CD14-positive monocyte (primary cell): ENCODE measurements at regions of chr20 and their contacts with region 1.

Region 1: DNA sequence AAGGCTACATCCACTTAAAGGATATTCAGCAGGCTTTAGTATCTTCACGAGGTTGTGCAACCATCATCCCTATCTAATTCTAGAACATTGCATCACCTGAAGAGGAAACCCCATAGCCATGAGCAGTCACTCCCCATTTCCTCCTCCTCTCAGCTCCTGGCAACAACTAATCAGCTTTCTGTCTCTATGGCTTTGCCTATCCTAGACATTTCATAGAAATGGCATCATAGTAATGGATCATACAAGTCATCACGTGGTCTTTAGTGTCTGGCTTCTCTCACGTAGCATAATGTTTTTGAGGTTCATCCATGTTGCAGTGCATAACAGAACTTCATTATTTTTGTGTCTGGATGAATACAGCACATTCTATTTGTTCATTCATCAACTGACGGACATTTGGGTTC is 20.5 kb downstream of the SNAI1 start:
- DNase-seq: peak; percentile 93 to 99 (median 98)
- H3K4me3 ChIP-seq: no peak overlapping the region
- H3K4me3 Mint-ChIP-seq: peak overlapping the region in 1 of 2 donors; percentile 9
- H3K27ac ChIP-seq: peak overlapping the region; percentile 70 to 90
- H3K27ac Mint-ChIP-seq: peak overlapping the region; percentile 91 to 99 (median 96)
- H3K4me1 ChIP-seq: peaks cover 82 to 83% of the 10 kb centered on the region in 2 donors
- H3K4me1 Mint-ChIP-seq: peaks cover 74% of the 10 kb centered on the region
- H3K27me3 ChIP-seq: no peaks in the 10 kb centered on the region
- H3K27me3 Mint-ChIP-seq: peaks cover 0 to 4% (median 0%) of the 10 kb centered on the region in 3 donors
- CTCF ChIP-seq: no peak

Region 2: DNA sequence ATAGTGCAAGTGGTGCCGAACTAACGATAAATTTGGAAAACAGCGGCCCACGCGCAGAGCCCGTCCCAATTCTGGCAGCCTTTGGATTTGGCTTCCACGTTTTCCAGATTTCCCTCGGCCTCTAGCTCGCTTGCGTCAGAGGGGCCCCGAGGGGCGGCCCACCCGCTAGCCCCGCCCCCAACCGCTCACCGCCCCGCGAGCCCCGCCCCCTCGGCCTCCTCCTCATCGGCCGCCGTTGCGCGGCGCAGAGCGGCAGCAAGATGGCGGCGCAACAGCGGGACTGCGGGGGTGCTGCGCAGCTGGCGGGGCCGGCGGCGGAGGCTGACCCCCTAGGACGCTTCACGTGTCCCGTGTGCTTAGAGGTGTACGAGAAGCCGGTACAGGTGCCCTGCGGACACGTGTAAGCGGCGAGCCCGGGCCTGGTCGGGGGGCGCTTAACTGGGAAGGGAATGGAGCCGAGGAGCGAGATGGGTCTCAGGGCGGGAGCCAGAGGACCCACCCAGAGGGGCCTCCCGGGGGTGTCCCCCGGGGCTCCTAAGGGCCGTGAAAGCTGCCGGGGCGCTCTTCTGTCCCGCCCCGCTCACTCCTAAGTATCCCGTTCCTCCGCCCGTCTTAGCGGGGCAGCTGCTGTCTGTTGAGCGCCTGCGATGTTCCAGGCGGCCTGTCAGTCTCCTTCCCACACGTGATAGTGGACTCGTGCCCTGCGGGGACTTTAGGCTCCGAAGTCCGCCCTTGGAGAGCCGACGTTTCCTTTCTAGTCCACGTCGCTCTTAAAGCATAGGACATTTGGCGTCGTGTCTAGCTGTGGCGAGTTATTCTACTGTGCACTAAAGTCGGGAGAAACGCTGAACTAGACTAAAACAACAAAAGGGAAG is 66.9 kb before region 1 on chr20 and contains the start of gene RNF114:
- intact Hi-C with region 1: no loop called
- DNase-seq: peak; percentile 87 to 89 (median 87)
- H3K4me3 ChIP-seq: peak within 1 kb of the TSS; percentile 82 to 93 (median 93)
- H3K4me3 Mint-ChIP-seq: peak within 1 kb of the TSS; percentile 94 to 98
- H3K27ac ChIP-seq: peak within 1 kb of the TSS; percentile 90 to 97
- H3K27ac Mint-ChIP-seq: peak within 1 kb of the TSS; percentile 95 to 98 (median 97)
- H3K4me1 ChIP-seq: peaks cover 45 to 51% of the 10 kb centered on the region in 2 donors
- H3K4me1 Mint-ChIP-seq: peaks cover 51% of the 10 kb centered on the region
- H3K27me3 ChIP-seq: no peaks in the 10 kb centered on the region
- H3K27me3 Mint-ChIP-seq: no peaks in the 10 kb centered on the region
- CTCF ChIP-seq: no peak
- polyA plus RNA-seq, gene RNF114: 128 to 164 (median 146) TPM

Region 3: DNA sequence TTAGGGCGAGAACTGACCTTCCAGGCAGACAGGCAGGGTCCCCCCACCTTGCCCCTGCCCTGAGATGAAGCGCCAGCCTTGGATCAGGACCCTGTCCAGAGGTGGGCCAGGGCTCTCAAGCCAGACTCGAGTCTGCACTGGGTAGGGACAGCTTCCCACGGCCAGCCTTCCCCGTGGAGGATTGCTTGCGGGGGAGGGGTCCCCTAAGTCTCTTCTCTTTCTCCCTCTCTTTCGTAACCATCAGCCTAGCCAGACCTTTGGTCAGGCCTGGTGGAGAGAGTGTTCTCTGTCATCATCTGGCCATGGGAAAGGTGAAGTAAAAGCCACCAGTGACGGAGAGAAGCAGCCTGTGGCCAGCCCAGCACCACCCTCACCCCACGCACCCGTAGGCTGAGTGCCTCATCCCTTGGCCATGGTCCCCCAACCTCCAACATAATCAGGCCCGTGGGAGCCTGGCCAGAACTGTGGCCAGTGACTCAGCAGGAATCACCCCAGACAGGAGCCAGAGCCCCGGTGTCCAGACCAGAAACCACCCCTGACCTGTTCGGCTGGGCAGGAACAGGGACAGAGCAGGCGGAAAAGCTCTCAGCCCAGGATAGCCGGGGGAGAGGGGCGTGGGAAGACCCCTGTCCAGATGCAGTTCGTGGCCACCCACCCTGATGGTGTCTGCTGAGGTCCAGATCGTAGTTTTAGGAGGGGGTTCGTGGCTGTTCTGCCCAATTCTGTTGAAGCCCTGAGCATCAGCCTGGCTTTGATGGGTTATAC is 26.6 kb after region 1 on chr20:
- intact Hi-C with region 1: loop called in 1 of 2 experiments (anchors 5 kb)
- DNase-seq: peak; percentile 94 to 96 (median 95)
- H3K4me3 ChIP-seq: peak overlapping the region in 1 of 3 experiments; percentile 32
- H3K4me3 Mint-ChIP-seq: peak overlapping the region in 1 of 2 donors; percentile 30
- H3K27ac ChIP-seq: peak overlapping the region; percentile 69 to 83
- H3K27ac Mint-ChIP-seq: peak overlapping the region; percentile 66 to 94 (median 90)
- H3K4me1 ChIP-seq: peaks cover 42 to 61% of the 10 kb centered on the region in 2 donors
- H3K4me1 Mint-ChIP-seq: peaks cover 54% of the 10 kb centered on the region
- H3K27me3 ChIP-seq: no peaks in the 10 kb centered on the region
- H3K27me3 Mint-ChIP-seq: peaks cover 1 to 6% (median 4%) of the 10 kb centered on the region in 3 donors
- CTCF ChIP-seq: no peak

Region 4: GRCh38 chr20:50048420-50049166 is 45.3 kb after region 1 on chr20:
- intact Hi-C with region 1: loop called in 1 of 2 experiments (anchors 5 kb)
- DNase-seq: peak; percentile 66 to 70 (median 69)
- H3K4me3 ChIP-seq: peak overlapping the region in 1 of 3 experiments; percentile 43
- H3K4me3 Mint-ChIP-seq: peak overlapping the region; percentile 37 to 68
- H3K27ac ChIP-seq: peak overlapping the region; percentile 35 to 83
- H3K27ac Mint-ChIP-seq: peak overlapping the region; percentile 47 to 91 (median 88)
- H3K4me1 ChIP-seq: peaks cover 46 to 51% of the 10 kb centered on the region in 2 donors
- H3K4me1 Mint-ChIP-seq: peaks cover 44% of the 10 kb centered on the region
- H3K27me3 ChIP-seq: no peaks in the 10 kb centered on the region
- H3K27me3 Mint-ChIP-seq: peaks cover 0 to 6% (median 0%) of the 10 kb centered on the region in 3 donors
- CTCF ChIP-seq: no peak

Region 5: GRCh38 chr20:50333856-50334255 is 330.6 kb after region 1 on chr20:
- intact Hi-C with region 1: no loop called
- DNase-seq: no peak
- H3K4me3 ChIP-seq: no peak overlapping the region
- H3K4me3 Mint-ChIP-seq: no peak overlapping the region
- H3K27ac ChIP-seq: no peak overlapping the region
- H3K27ac Mint-ChIP-seq: peak overlapping the region in 2 of 7 donors; percentile 68 to 82
- H3K4me1 ChIP-seq: peaks cover 57 to 73% of the 10 kb centered on the region in 2 donors
- H3K4me1 Mint-ChIP-seq: peaks cover 62% of the 10 kb centered on the region
- H3K27me3 ChIP-seq: no peaks in the 10 kb centered on the region
- H3K27me3 Mint-ChIP-seq: peaks cover 0 to 6% (median 0%) of the 10 kb centered on the region in 3 donors
- CTCF ChIP-seq: no peak